AG04449 (cell line): ENCODE measurements at regions of chr17 and their contacts with region 1.

Region 1: DNA sequence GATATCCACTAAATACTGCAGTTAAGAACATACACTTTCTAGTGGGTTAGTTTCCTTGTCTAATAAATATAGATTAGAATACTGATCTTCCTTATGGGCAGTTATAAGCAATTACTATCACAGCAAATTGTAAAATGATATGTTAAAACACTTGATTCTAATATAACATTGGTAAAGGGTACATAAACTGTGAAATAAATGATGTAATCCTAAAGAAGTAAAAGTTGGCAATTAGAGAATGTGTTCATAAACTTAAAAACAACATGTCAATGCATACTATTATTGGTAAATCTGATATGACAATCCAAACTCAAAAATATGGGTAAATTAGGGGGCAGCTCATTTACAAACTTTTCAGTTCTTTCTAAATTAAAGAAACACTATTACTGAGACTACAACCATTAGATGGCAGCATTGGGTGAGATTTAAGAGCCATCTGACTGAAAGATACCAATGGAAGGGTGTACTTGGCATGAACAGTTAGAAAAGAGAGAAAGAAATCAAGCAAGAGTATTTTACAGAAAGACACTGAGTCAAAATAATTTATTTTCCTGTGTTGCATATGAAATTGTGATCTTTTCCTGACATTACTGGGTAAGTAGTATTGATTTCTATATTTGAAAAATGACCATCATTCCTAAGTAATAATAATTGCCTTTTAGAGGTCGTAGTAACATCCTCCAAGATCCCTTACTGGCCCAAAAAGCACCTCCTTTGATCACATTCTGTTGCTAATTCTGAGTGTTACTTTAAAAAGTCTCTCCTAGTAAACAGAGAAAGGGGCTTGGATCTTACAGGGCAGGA is 119.6 kb downstream of the SPAG9 start:
- DNase-seq: no peak
- H3K4me3 ChIP-seq: no peak overlapping the region
- CTCF ChIP-seq: no peak

Region 2: GRCh38 chr17:50824429-50824828 is 176.6 kb before region 1 on chr17:
- CTCF ChIA-PET with region 1: no interaction called
- POLR2A ChIA-PET with region 1: no interaction called
- DNase-seq: no peak
- H3K4me3 ChIP-seq: no peak overlapping the region
- CTCF ChIP-seq: no peak

Region 3: DNA sequence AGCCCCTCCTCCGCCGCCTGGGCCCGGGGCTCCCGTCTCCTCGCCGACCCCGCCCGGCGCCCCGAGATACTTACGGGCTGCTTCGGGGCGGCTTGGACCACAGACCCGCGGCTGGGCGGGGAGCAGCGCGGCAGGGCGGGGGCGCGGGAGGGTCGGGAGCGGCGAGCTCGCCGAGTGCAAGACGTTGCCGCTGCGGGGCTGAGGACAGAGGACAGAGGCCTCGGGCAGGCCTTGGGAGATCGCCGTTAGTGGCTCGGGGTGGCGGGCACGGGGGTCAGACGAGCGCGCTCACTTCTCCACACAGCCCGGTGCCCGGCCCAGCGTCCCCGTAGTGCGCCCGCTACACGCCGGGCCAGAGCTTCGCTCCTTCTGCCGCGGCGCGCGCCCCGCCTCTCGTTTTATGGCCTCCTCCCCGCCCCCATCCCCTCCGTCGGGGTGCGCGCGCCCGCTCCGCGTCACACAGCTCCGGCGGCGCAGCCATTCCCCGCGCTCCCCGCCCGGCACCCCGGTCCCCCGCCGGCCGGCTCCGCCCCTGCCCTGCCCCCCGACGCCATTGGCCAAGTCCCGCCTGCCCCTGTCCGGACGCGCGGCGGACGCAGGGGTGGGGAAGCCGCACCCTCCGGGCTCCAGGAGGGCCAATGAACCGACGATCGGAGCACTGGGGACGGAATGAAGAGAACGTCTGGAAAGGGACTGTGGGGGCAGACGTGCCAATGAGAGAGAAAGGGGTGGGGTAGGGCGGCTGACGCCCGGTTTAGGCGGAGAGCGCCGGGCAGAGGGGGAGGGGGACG is 134.9 kb before region 1 on chr17 and contains the start of gene TOB1:
- CTCF ChIA-PET with region 1: no interaction called
- POLR2A ChIA-PET with region 1: no interaction called
- DNase-seq: peak; percentile 72
- H3K4me3 ChIP-seq: peak within 1 kb of the TSS; percentile 92
- CTCF ChIP-seq: no peak

Region 4: DNA sequence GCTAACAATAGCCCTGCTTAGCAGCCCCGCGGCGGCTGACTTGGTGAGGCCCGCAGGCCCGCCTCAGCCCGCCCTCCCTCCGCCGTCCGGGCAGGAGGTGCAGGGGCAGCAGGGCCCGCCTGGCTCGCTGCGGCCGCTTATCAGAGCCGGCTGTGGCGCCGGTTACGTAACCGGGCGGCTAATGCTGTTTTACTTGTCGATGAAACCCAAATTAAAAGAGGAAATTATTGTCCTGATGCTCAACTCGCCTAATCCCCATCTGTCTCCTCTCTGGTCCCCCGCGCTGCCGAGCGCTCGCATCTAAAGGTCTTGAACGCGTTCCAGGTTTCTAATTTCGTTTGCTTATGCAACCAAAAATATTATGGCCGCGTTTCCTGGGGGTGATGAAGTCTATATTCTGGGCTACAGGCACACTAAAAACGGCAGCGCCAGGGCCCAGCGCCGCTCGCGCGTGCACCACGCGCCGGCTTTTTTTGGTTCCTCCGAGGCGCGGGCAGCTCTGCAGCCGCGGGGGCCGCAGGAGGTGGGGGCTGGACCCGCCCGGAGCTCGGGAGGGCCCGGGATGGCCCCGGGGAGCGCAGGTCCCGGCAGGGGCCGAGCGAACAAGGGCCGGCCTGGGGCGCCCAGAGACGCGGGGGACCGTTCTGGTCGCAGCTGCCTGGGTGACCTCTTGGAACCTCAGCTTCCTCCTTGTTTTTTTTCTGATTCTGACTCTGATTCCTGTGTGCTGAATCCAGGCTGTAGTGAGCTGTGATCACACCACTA is 69.7 kb before region 1 on chr17:
- CTCF ChIA-PET with region 1: no interaction called
- POLR2A ChIA-PET with region 1: no interaction called
- DNase-seq: no peak
- H3K4me3 ChIP-seq: peak overlapping the region; percentile 42
- CTCF ChIP-seq: no peak

Region 5: DNA sequence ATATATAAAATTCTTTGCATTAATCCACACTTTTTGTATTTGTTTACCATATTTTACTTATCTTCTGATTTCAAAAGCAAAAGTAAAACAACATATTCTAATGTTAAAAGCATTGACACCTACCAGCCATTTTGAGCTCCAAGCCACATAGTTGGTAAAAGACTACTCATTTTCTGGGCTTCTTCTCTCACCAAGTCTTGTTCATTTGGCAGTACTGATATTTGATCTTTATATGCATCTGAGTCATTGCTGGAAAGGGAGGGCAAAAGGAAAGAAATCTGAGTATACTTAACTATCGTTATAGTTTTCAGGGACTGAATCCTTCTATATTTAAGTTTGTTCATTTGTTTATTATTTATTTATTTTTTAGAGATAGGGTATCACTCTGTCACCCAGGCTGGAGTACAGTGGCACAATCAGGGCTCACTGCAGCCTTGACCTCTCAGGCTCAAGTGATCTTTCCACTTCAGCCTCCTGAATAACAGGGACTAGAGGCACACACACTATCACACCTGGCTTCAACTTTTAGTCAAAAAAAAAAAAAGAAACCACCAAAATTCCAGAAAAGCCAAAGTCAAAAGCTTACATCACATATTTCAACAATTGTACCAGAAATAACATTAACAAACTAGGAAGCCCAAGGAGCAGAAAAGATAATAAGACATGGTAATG is 13.9 kb before region 1 on chr17:
- CTCF ChIA-PET with region 1: interaction called, 36 read pairs
- POLR2A ChIA-PET with region 1: no interaction called
- DNase-seq: no peak
- H3K4me3 ChIP-seq: no peak overlapping the region
- CTCF ChIP-seq: no peak

Region 6: DNA sequence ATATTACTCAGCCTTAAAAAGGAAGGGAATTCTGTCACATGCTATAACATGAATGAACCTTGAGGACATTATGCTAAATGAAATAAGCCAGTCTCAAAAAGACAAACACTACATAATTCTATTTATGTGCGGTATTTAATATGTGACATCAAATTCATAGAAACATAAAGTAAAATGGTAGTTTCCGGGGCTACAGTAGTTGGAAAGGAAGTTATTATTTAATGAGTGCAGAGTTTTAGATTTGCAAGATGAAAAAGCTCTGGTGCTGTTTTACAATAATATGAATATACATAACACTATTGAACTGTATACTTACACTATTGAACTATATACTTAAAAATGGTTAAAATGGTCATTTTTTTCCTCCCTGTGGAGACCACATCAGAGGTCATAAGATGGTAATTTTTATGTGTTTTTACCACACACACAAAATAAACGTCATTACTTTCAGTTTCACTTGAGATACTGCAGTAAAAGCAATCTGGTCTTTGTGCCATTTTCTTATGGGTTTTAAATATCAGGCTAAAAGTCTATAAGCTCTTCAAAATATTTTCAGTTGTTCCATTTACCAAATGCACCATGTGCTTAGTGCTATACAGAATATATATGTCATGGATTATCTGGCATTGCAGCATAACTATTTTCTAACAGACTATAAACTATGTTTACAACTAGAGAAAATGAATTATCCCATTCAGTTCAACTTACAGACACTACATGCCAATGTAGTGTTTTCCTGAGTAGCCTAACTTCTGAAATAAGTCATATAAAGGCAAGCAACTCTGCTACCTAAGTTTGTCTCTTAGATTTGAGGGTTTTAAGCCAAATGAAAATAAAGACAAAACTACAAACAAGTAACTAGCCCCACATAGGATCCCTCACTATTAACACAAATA is 28.8 kb after region 1 on chr17:
- CTCF ChIA-PET with region 1: interaction called, 22 read pairs
- POLR2A ChIA-PET with region 1: no interaction called
- DNase-seq: no peak
- H3K4me3 ChIP-seq: no peak overlapping the region
- CTCF ChIP-seq: no peak

Region 7: DNA sequence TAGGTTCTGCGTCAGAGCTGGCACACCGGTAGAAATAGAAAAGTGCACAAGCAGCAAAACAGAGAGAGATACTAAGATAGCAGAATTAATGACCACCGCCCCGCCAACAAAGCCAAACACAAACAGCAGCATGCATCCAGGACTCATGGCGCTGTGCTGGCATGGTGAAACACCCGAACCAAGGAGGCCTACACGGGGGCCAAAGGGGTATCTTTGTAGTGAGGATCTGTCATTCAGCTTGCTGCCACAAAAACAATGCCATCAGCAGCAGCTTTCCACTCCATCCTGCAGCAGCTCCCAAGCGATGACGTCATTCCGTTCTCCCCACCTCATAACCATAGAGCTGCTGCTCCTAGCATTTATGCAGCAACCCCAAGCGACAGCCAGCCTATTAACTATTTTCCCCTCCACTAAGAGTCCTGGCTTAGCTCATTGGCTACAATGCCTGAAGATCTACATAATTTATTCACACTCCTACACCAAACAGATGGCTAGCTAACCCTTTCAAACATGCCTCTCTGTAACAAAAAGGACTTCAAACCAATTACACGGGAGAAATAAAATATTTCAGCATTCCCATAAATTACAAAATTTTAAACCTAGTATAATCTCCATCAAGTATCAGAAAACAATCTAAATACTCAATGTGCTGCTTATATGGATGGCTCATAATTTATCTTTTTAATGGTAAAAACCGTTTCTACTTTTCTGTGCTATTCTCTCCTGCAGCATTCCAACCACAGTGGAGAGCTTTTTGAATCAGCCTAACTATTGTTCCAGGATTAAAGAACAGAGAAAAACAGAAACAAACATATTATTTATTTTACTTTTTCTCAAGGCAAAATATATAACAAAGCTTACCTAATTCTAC is 45.7 kb after region 1 on chr17:
- CTCF ChIA-PET with region 1: interaction called, 276 read pairs
- POLR2A ChIA-PET with region 1: no interaction called
- DNase-seq: peak; percentile 70
- H3K4me3 ChIP-seq: peak overlapping the region; percentile 49
- CTCF ChIP-seq: no peak

Region 8: DNA sequence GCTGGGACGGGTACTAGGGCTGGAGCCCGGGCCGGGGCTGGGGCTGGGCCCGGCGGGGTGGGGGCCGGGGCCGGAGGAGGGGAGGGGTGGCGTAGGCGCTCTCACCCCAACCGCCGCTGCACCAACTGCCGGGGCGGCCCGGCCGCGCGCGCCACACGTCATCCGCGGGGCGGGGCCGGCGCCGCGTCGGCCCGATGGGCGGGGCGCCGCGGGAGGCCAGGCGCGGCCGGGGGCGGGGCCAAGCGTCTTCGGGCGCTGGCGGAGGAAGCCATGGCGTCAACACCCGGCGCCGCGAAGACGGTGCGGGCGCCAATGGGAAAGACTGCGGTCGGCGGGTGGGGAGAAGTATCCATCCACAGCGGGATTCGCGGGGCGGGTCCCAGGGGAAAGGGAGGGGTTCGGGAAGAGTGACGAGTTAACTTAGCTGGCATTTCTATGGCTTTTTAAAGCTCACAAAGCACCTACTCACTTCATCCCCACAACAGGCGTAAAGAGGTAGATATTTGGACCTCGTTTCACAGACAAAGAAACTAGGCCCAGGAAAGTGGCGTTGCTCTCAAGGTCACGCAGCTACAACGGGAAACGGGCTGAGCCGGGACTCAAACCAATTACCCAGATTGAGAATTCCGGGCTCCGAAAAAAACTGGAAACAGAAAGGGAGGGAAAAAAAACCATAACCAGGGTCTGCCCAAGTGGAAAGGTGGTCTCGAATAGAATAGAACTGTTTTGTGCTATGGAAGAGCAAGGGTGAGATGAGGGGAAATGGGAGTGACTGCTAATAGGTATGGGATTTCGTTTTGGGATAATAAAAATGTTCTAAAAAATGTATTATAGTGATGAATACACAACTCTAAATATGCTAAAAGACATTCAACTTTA is 119.9 kb after region 1 on chr17 and contains the start of gene SPAG9:
- CTCF ChIA-PET with region 1: interaction called, 21 read pairs
- POLR2A ChIA-PET with region 1: interaction called, 3 read pairs
- DNase-seq: peak; percentile 75
- H3K4me3 ChIP-seq: peak within 1 kb of the TSS; percentile 96
- CTCF ChIP-seq: no peak

Region 9: DNA sequence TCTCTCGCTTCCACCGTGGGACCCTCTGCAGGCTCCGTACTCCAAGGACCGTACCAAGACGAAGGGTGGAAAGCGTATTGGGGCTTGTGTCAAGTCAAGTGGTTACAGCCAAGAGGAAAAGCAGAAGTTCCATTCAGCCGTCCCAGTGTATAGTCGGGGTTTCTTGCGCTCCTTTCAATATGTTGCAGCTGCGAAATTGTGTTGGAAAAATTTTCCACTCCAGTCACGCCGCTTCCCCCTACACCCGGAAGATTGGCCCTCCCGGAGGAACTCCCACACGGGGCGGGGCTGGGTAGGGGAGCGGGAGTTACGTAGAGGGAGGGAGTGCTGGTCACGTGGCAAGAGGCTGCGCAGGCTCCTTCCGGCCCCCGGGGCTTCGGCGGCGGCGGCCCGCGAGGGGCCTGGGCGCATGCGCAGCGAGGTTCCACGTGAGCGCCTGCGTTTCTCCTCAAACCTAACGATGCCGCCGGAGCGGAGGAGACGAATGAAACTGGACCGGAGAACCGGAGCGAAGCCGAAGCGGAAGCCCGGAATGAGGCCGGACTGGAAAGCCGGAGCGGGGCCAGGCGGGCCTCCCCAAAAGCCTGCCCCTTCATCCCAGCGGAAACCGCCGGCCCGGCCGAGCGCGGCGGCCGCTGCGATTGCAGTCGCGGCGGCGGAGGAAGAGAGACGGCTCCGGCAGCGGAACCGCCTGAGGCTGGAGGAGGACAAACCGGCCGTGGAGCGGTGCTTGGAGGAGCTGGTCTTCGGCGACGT is 259.3 kb after region 1 on chr17 and contains the start of gene UTP18:
- CTCF ChIA-PET with region 1: no interaction called
- POLR2A ChIA-PET with region 1: no interaction called
- DNase-seq: peak; percentile 87
- H3K4me3 ChIP-seq: peak within 1 kb of the TSS; percentile 82
- CTCF ChIP-seq: no peak